Spleen (tissue), 13 donors: ENCODE measurements at regions of chr17 and their contacts with region 1.

Region 1: DNA sequence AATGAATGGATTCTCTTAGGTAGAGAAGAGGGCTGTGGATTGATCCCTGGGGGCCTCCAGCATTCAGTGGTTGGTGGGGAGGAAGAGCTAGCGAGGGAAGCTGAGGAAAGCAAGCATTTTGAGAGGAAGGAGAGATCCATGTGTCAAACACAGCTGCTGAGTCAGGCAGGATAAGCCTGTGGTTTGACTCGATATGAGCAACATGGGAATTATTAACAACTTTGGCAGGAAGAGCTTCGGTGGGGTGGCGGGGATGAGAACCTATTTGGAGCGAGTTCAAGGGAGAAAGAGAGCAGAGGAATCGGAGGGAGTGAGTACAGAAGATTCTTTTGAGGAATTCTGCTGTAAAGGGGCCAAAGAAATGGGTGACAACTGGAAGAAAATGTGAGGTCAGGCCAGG is 59.5 kb upstream of the CDC42EP4 start:
- DNase-seq: no peak
- H3K4me3 ChIP-seq: no peak overlapping the region
- H3K27ac ChIP-seq: no peak overlapping the region
- H3K4me1 ChIP-seq: peaks cover 0 to 17% (median 5%) of the 10 kb centered on the region in 6 donors
- H3K27me3 ChIP-seq: no peaks in the 10 kb centered on the region
- CTCF ChIP-seq: no peak
- POLR2A ChIP-seq: no peak

Region 2: GRCh38 chr17:72556944-72557826 is 814.1 kb before region 1 on chr17:
- intact Hi-C with region 1: loop called (anchors 10 kb)
- DNase-seq: peak; percentile 81
- H3K4me3 ChIP-seq: no peak overlapping the region
- H3K27ac ChIP-seq: no peak overlapping the region
- H3K4me1 ChIP-seq: no peaks in the 10 kb centered on the region
- H3K27me3 ChIP-seq: peaks cover 0 to 47% (median 0%) of the 10 kb centered on the region in 7 donors
- CTCF ChIP-seq: peak in 10 of 11 experiments; percentile 6 to 76 (median 67)
- POLR2A ChIP-seq: no peak

Region 3: DNA sequence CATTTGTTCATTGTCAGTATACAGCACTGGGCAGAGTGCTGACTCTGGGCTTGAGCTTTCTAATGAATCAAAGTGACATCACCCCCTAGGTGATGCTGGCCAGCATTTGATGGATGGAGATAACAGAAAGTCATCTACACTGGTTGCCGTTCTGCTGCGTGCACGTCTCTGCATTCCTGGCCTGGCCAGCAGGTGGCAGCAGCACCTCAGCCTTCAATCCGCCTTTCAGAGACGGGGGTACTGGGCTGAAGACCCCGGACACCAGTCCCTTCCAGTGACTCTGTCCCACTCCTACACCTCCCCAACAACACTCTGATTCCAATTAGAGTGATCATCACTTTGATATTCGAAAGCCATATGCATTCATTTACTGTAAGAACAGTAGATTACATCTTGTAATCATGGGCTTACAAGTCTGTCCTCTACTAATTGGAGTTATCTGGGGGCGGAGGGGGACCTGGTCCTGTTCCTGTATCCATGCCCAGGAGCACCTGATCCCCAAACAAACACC is 115.6 kb before region 1 on chr17:
- intact Hi-C with region 1: loop called (anchors 2 kb)
- DNase-seq: peak; percentile 83
- H3K4me3 ChIP-seq: no peak overlapping the region
- H3K27ac ChIP-seq: no peak overlapping the region
- H3K4me1 ChIP-seq: peaks cover 0 to 10% (median 6%) of the 10 kb centered on the region in 6 donors
- H3K27me3 ChIP-seq: no peaks in the 10 kb centered on the region
- CTCF ChIP-seq: peak; percentile 89 to 96 (median 94)
- POLR2A ChIP-seq: no peak